Aorta (tissue), 5 donors: ENCODE measurements at regions of chr1 and their contacts with region 1.

Region 1: DNA sequence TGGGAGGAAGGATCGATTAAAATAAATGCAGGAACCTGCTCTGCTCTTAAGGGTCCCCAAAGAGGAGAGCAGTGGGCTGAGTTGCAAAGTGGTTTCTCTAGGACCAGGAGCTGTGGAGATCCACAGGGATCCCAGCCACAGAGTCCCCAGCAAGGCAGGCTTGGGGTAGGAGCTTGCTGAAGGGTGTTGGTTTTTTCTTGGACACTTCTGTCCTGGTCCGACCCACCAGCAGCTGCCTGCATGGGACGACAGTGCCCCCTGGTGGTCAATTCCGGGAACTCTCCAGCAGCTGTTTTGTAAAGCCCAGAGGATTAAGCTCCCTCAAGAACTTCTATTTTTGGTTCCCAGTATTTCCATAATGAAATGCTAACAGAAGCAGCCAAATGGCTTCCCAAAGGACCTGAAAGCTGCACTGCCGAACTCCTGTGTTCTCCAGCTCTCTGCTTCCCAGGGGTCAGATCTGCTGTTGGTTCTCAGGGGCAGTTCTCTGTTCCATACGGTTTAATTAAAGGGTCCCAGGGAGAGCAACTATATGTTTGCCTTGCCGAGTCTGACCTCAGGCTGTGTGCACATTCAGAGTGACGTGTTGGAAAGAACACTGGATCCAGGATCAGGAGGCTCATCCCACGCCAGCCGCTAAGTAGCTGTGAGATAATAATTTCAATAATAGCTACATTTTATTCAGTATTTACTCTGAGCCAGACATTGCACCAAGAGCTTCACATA is 23.2 kb downstream of the NENF start:
- DNase-seq: peak; percentile 92 to 97
- ATAC-seq: peak; percentile 82
- H3K4me3 ChIP-seq: no peak overlapping the region
- H3K27ac ChIP-seq: peak overlapping the region in 1 of 2 donors; percentile 55
- H3K4me1 ChIP-seq: peaks cover 0 to 1% of the 10 kb centered on the region in 2 donors
- H3K27me3 ChIP-seq: no peaks in the 10 kb centered on the region

Region 2: DNA sequence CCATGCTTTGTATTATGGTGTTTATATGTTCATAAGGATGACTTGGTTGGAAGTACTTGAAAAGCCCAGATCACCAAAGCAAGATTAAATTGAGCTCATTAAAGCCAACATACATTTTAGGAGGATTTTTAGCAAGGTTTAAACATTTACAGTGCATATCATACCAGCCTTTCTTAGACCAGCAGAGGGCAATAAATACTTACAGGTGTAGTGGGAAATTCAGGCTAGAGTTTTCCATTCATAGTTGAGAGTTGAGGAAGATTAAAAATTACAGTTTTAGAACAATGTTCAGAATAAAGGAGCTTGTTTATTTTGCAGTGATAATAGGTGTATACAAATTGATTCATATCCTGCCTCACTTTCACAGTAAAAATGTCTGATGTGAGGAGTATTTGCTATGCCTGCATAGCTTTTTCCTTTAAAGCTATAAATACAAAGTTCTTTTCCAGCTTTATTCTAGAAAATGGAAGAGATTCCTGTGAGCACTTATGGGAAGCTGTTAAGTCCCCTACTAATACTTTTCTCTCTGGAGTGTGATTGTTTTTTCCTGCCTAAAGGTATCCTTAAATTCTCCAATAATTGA is 385.2 kb before region 1 on chr1:
- intact Hi-C with region 1: loop called (anchors 2 kb)
- DNase-seq: no peak
- ATAC-seq: no peak
- H3K4me3 ChIP-seq: no peak overlapping the region
- H3K27ac ChIP-seq: no peak overlapping the region
- H3K4me1 ChIP-seq: no peaks in the 10 kb centered on the region
- H3K27me3 ChIP-seq: no peaks in the 10 kb centered on the region

Region 3: GRCh38 chr1:212284744-212285684 is 171.0 kb before region 1 on chr1 and contains the start of gene PPP2R5A:
- intact Hi-C with region 1: loop called in 1 of 2 experiments (anchors 5 kb)
- DNase-seq: peak; percentile 99
- ATAC-seq: peak; percentile 98
- H3K4me3 ChIP-seq: peak within 1 kb of the TSS; percentile 69 to 73
- H3K27ac ChIP-seq: peak within 1 kb of the TSS; percentile 81 to 97
- H3K4me1 ChIP-seq: peaks cover 0 to 3% of the 10 kb centered on the region in 2 donors
- H3K27me3 ChIP-seq: no peaks in the 10 kb centered on the region
- total RNA-seq, gene PPP2R5A: 43.2 to 45.3 TPM

Region 4: DNA sequence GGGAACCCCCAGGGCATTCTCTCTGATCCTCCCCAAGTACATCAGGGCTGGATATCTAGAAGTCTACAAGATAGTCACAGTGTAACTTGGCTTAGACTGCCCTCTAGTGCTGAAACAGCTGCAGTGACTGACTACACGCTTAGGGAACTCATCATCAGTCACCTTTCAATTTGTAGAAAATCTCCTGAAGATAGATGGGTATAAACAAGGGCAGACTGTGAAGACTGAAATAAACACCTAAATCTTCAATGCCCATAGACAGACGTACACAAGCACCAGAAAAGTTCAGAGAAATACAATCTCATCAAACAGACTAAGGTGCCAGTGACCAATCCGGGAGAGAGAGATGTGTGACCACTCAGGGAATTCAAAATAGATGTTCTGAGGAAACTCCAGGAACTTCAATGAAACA is 87.9 kb before region 1 on chr1:
- intact Hi-C with region 1: loop called (anchors 2 to 5 kb)
- DNase-seq: no peak
- ATAC-seq: peak; percentile 89
- H3K4me3 ChIP-seq: no peak overlapping the region
- H3K27ac ChIP-seq: no peak overlapping the region
- H3K4me1 ChIP-seq: no peaks in the 10 kb centered on the region
- H3K27me3 ChIP-seq: no peaks in the 10 kb centered on the region

Region 5: DNA sequence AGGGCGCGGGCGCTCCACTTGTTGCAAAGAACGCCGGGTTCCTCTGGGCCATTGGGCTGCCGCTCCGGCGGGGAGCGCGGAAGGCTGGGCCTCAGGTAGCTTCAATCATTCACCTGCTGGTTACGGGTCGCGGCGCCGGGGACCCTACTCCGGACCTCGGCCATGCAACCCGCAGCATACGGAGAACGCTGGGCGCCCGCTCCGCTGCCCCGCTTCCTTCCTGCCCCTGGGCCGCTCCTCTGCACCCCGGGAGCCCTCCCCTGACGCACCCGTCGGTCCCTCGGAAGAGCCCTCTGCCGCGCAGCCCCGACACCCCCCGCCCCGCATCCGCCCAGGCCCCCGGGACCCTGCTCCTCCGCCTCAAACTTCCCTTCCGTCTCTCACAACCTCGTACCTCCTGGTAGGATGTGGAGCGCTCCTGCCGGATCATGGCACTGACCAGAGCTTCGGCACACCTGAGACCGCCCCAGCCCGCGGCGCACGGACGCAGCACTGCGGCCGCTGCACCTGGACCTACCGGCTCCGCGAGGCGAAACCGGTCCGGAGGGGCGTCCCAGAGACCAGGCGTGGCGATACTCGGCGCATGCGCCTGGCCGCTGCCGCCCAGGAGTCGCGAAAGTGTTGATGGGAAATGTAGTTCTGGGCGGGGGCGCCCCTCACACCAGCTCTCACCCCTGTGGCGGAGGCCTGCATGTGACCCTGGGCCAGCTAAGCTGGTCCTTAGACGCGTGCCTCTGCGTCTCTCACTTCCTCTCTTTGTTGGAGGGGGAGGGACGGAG is 41.4 kb before region 1 on chr1 and contains the start of gene PACC1:
- intact Hi-C with region 1: loop called in 1 of 2 experiments (anchors 5 kb)
- DNase-seq: peak; percentile 95 to 96
- ATAC-seq: peak; percentile 95
- H3K4me3 ChIP-seq: peak within 1 kb of the TSS; percentile 74 to 82
- H3K27ac ChIP-seq: no peak within 1 kb of the TSS
- H3K4me1 ChIP-seq: no peaks in the 10 kb centered on the region
- H3K27me3 ChIP-seq: no peaks in the 10 kb centered on the region
- total RNA-seq, gene PACC1: 5.3 to 7.5 TPM

Region 6: GRCh38 chr1:212432706-212433576 is 23.0 kb before region 1 on chr1 and contains the start of gene NENF:
- intact Hi-C with region 1: loop called in 1 of 2 experiments (anchors 2 kb)
- DNase-seq: peak; percentile 91 to 95
- ATAC-seq: peak; percentile 97
- H3K4me3 ChIP-seq: peak within 1 kb of the TSS; percentile 94 to 99
- H3K27ac ChIP-seq: peak within 1 kb of the TSS; percentile 69 to 92
- H3K4me1 ChIP-seq: peaks cover 4% of the 10 kb centered on the region in 2 donors
- H3K27me3 ChIP-seq: no peaks in the 10 kb centered on the region
- total RNA-seq, gene NENF: 67.9 to 91.5 TPM

Region 7: DNA sequence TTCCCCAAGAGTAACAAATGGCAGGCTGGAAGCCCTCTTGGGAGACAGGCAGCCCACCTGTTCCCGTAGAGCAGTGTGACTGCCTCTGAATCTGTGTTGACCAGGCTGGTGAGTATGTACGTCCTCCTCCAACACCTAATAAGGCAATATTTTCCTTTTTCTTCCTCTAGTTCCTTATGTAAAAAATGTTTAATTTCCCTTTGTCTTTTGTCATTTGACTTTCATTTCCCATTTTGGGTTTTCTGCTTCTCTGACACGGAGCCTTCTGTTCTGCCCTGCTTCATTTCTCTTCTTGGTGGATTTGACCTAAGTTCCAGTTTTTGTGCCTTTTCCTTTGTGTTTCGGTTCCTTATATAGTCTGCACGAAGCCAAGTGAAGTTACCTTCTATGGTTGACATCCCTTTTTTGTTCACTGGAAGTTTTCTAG is 86.8 kb after region 1 on chr1:
- intact Hi-C with region 1: no loop called
- DNase-seq: no peak
- ATAC-seq: no peak
- H3K4me3 ChIP-seq: no peak overlapping the region
- H3K27ac ChIP-seq: no peak overlapping the region
- H3K4me1 ChIP-seq: no peaks in the 10 kb centered on the region
- H3K27me3 ChIP-seq: no peaks in the 10 kb centered on the region

Region 8: DNA sequence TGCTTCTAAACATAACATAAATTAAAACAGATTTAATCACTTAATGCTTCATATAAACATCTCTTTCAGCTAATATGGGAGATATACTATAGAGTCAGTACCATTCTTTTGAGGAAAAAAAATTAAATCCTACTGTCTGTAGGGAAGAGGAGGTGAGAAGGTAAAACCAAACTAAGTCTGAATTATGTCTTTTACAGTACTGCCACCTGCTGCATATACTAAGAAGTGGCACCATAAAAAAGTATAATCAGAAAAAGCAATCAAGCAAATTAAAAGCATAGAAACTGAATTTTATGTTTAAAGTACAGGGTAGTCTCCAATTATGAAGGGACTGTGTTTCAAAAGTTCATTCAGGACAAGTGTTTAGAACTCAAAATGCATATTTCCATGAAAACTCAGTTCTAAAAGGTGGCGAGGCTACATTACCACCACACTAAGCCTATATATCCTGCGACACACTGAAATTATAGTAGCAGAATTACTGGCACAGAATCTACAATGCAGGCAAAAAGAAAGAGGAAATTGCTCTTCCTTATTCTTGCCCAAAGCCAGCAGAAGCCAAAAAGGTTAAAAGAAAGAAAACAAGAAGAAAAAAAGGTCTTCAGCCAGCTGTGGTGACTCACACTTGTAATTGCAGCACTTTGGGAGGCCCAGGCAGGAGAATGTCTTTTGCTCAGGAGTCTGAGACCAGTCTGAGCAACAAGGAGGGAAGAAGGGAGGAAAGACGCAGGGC is 326.6 kb after region 1 on chr1:
- intact Hi-C with region 1: loop called (anchors 5 to 10 kb)
- DNase-seq: no peak
- ATAC-seq: no peak
- H3K4me3 ChIP-seq: no peak overlapping the region
- H3K27ac ChIP-seq: no peak overlapping the region
- H3K4me1 ChIP-seq: no peaks in the 10 kb centered on the region
- H3K27me3 ChIP-seq: no peaks in the 10 kb centered on the region